ENCODE measurements at regions of chr14 and their contacts with region 1.

Region 1: DNA sequence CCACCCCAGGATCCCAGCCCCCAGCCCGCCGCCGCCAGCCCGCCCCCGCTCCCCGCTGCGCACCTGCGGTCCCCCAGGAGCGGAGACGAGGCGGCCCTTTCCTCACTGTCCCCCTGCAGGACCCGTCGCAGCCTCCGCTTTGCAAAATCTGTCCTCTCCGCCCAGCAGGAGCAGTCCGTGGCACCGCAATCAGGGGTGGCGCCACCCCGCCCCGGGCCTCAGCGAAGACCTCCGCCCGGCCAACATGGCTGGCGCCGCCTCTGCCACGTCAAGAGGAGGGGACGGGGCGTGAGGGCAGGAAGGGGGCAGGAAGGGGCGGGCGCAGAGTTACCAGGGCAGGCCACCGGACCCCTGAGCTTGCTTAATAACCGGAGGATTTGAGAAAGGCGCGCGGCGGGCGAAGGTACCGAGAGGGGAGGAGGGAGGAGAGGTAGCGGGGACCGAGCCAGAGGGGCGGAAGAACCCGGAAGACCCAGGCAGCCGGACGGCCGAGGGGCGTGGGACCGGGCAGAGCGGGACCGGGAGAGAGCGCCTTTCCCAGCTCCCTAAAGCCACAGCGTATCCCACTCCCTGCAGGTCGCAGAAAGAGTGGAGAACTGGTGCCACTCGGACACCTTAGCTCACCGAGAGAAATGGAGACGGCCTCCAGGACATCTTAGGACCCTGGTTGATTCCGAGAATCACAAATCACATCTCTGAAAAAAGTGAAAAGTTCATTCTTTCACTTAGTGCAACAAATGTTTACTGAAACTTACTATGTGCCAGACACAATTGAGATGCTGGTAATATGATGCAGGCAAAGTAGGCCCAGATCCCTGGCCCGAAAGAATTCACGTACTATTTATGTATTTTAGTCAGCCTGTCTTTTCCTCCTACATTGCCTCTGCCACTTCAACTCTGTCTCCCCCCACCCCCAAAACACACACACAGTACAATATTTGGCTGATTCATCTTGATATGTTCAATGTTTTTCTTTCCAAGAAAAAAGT is at the start of gene SEC23A:
- DNase-seq: peak; percentile 57 to 89 (median 82)
- ATAC-seq: peak; percentile 94
- H3K4me3 ChIP-seq: peak within 1 kb of the TSS; percentile 92 to 94
- H3K4me3 Mint-ChIP-seq: peak within 1 kb of the TSS; percentile 95
- H3K27ac ChIP-seq: peak within 1 kb of the TSS; percentile 90 to 93
- H3K27ac Mint-ChIP-seq: peak within 1 kb of the TSS; percentile 98
- H3K4me1 ChIP-seq: peaks cover 23% of the 10 kb centered on the region
- H3K4me1 Mint-ChIP-seq: peaks cover 52% of the 10 kb centered on the region
- H3K27me3 ChIP-seq: no peaks in the 10 kb centered on the region
- H3K27me3 Mint-ChIP-seq: no peaks in the 10 kb centered on the region
- CTCF ChIP-seq: no peak
- total RNA-seq, gene SEC23A: 61.0 to 62.0 TPM

Region 2: DNA sequence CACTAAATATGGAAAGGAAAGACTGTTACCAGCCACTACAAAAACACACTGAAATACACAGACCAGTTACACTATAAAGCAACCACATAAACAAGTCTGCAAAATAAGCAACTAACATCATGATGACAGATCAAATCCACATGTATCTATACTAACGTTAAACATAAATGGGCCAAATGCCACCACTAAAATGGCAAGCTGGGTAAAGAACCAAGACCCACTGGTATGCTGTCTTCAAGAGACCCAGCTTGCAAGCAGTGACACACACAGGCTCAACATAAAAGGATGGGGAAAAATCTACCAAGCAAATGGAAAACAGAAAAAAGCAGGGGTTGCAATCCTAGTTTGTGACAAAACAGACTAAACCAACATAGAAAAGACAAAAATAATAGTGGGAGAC is 1156.4 kb before region 1 on chr14:
- CTCF ChIA-PET with region 1: no interaction called
- POLR2A ChIA-PET with region 1: no interaction called
- intact Hi-C with region 1: no loop called
- DNase-seq: no peak
- ATAC-seq: no peak
- H3K4me3 ChIP-seq: no peak overlapping the region
- H3K4me3 Mint-ChIP-seq: no peak overlapping the region
- H3K27ac ChIP-seq: no peak overlapping the region
- H3K27ac Mint-ChIP-seq: no peak overlapping the region
- H3K4me1 ChIP-seq: no peaks in the 10 kb centered on the region
- H3K4me1 Mint-ChIP-seq: no peaks in the 10 kb centered on the region
- H3K27me3 ChIP-seq: no peaks in the 10 kb centered on the region
- H3K27me3 Mint-ChIP-seq: no peaks in the 10 kb centered on the region
- CTCF ChIP-seq: no peak

Region 3: DNA sequence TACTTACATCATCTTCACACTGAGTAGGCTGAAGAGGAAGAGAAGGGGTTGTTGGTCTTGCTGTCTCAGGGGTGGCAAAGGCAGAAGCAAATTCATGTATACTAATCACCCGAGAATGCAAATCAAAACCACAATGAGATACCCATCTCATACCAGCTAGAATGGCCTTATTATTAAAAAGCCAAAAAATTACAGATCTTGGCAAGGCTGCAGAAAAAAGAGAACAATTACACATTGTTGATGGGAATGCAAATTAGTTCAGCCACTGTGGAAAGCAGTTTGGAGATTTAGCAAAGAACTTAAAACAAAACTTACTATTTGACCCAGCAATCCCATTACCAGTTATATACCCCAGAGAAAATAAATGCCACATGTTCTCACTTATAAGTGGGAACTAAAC is 155.1 kb before region 1 on chr14:
- CTCF ChIA-PET with region 1: no interaction called
- POLR2A ChIA-PET with region 1: no interaction called
- intact Hi-C with region 1: no loop called
- DNase-seq: no peak
- ATAC-seq: no peak
- H3K4me3 ChIP-seq: no peak overlapping the region
- H3K4me3 Mint-ChIP-seq: no peak overlapping the region
- H3K27ac ChIP-seq: no peak overlapping the region
- H3K27ac Mint-ChIP-seq: no peak overlapping the region
- H3K4me1 ChIP-seq: no peaks in the 10 kb centered on the region
- H3K4me1 Mint-ChIP-seq: no peaks in the 10 kb centered on the region
- H3K27me3 ChIP-seq: no peaks in the 10 kb centered on the region
- H3K27me3 Mint-ChIP-seq: peaks cover 3% of the 10 kb centered on the region
- CTCF ChIP-seq: no peak

Region 4: DNA sequence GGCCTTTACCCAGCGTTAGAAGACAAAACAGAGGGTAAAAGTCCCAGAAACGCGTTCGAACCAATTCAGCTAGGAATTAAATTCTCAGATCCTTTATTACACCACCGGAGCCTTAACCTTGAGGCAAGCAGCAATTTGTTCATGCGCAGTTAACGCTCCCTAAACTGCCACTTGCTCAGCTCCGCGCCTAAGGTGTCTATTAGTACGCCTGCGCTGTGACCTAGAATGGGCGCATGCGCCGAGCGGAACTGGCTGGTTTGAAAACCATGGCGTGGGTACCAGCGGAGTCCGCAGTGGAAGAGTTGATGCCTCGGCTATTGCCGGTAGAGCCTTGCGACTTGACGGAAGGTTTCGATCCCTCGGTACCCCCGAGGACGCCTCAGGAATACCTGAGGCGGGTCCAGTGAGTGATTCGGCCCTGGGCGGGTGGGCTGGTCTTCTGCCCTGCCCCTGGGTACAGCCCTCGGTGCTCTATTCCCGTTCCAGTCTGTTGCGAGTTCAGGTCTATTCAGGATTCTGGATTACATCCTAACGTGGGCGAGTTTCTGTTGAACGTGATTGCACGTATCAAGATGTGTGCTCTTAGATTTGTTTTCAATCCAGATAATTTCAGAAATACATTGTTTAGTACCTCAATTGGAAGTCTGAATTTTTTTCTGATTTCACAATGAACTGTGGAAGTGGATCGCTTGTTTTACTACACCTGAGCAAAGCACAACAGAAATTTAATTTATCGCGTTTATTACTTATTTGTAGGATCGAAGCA is 11.0 kb after region 1 on chr14 and contains the start of gene GEMIN2:
- CTCF ChIA-PET with region 1: interaction called, 3 read pairs
- POLR2A ChIA-PET with region 1: interaction called, 22 read pairs
- intact Hi-C with region 1: loop called (anchors 1 kb)
- DNase-seq: peak; percentile 86 to 97 (median 93)
- ATAC-seq: peak; percentile 98
- H3K4me3 ChIP-seq: peak within 1 kb of the TSS; percentile 73 to 92
- H3K4me3 Mint-ChIP-seq: peak within 1 kb of the TSS; percentile 99
- H3K27ac ChIP-seq: peak within 1 kb of the TSS; percentile 72 to 84
- H3K27ac Mint-ChIP-seq: peak within 1 kb of the TSS; percentile 98
- H3K4me1 ChIP-seq: peaks cover 8% of the 10 kb centered on the region
- H3K4me1 Mint-ChIP-seq: peaks cover 28% of the 10 kb centered on the region
- H3K27me3 ChIP-seq: no peaks in the 10 kb centered on the region
- H3K27me3 Mint-ChIP-seq: no peaks in the 10 kb centered on the region
- CTCF ChIP-seq: no peak
- total RNA-seq, gene GEMIN2: 14.0 to 14.5 TPM

Region 5: GRCh38 chr14:39368261-39368959 is 265.1 kb after region 1 on chr14:
- CTCF ChIA-PET with region 1: no interaction called
- POLR2A ChIA-PET with region 1: no interaction called
- intact Hi-C with region 1: loop called in 1 of 2 experiments (anchors 1 kb)
- DNase-seq: peak in 3 of 9 experiments; percentile 17 to 50 (median 39)
- ATAC-seq: no peak
- H3K4me3 ChIP-seq: no peak overlapping the region
- H3K4me3 Mint-ChIP-seq: no peak overlapping the region
- H3K27ac ChIP-seq: no peak overlapping the region
- H3K27ac Mint-ChIP-seq: no peak overlapping the region
- H3K4me1 ChIP-seq: no peaks in the 10 kb centered on the region
- H3K4me1 Mint-ChIP-seq: peaks cover 2% of the 10 kb centered on the region
- H3K27me3 ChIP-seq: no peaks in the 10 kb centered on the region
- H3K27me3 Mint-ChIP-seq: no peaks in the 10 kb centered on the region
- CTCF ChIP-seq: peak; percentile 19